Sciatic nerve (tissue), 2 donors: ENCODE measurements at regions of chr14 and their contacts with region 1.

Region 1: GRCh38 chr14:97172644-97173043 is 375.5 kb downstream of the VRK1 start:
- DNase-seq: no peak
- ATAC-seq: no peak

Region 2: DNA sequence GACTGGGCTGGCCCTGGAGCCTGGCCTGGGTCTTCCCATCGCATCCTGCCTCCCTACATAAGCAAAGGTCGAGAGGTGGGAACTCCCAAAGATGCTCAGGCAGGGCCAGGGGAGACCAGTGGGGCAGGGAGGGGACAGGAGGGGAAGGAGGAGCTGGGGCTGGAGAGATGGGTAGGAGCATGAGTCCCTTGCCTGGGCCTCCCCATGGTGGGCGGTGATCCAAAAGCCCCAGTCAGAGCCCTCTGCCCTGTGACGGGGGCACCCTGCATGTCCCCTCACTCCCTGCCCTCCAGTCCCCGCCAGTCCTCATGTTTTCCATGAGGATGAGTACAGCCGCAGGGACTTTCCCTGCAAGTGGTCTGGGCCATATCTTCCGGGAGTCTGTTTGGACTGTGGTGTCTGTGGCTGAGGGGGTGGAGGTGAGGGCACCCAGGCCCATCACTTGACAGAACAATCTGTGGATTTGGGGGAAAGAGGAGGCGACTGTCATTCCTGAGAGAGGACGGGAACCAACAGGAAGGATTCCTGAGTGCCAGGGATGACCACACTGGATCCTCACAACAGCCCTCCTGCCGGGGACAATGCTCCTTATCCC is 958.7 kb before region 1 on chr14:
- intact Hi-C with region 1: loop called (anchors 5 kb)
- DNase-seq: no peak
- ATAC-seq: peak; percentile 14